ENCODE measurements at regions of chr11 and their contacts with region 1.

Region 1: DNA sequence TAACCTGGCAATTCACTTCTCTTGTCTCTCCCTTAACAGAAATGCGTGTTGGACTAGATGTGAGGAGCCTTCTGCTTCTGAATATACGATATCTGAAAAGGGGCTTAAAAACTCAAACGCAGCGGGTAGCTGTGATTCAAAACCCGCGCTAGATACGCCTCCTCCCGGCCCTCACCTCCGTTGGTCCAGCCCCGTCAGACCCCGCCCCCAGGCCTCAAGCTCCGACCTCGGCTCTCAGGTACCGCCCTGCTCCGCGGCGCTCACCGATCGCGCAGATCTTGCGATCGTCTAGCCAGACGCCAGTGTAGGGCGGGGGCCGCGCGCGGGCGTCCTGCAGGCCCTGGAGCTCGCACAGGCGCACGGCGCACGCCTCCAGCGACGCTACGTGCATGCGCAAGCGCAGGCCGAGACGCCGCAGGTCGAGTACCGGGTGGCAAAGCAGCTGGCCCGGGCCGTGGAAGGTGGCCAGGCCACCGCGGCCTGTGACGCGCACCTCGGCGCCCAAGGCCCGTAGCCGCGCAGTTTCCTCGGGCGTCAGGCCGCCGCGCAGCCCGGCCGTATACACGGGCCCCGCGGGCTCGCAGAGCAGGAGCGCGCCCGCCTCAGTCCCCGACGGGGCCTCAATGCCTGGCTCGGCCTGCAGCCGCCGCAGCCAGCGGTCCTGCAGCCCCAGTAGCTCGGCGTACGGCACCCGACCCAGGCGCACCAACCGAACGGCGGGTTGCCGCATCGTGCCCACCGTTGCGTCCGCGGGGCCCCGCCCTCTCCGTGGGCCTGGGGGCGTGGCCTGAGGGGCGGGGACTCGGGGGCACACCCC is at the start of gene LIPT2:
- DNase-seq: peak; percentile 95 to 97
- ATAC-seq: peak; percentile 98 to 100 (median 99)
- H3K4me3 ChIP-seq: peak within 1 kb of the TSS; percentile 45 to 96 (median 84)
- H3K27ac ChIP-seq: peak within 1 kb of the TSS; percentile 93 to 99 (median 98)
- H3K4me1 ChIP-seq: peaks cover 0 to 20% (median 10%) of the 10 kb centered on the region in 9 donors
- H3K27me3 ChIP-seq: no peaks in the 10 kb centered on the region
- CTCF ChIP-seq: peak in 1 of 9 donors; percentile 16
- total RNA-seq, gene LIPT2: 1.0 to 3.8 (median 1.7) TPM

Region 2: DNA sequence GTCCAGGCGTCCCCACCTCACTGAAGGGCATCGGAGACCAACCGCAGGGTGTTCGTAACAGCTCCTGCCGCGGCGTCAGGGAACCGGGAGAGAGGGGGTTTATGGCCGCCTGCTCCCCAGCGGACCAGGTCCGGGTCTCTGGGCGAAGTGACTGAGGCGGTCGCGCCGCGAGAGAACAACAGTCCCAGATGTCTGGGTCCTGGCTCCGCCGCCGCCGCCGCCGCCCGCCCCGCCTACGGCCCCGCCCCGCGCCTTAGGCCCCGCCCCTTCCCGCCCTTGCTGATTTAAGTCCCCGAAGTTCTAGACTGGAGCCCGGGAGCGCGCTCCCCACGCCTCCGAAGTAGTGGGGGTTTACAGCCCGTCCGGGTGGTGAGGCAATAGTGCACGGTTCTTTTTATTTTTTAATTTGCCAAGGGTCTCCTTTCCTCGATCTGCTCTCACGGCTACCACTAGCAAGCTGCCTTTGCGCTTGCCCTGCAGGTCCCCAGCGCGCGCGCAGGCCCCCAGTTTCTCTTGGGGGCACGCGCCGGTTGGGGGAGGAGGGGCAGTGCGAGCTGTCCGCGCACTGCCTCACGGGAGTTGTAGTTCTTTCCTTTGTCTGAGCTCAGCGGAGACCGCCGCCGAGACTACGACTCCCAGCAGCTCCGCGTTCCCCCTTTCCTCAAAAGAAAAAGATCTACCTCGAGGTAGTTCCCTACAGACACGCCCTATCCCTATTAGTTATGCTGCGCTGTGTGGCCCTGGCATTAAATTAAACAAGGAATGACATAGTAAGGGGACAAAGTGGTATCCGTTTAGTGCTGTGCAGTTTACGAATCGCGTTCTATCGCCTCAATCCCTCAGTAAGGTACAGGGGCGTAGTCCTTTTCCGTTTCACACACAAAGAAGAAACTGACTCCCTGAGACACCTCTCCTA is 94.7 kb before region 1 on chr11 and contains the start of gene PGM2L1:
- intact Hi-C with region 1: loop called in 1 of 10 experiments (anchors 5 kb)
- DNase-seq: peak; percentile 90 to 96
- ATAC-seq: peak; percentile 97 to 99 (median 99)
- H3K4me3 ChIP-seq: peak within 1 kb of the TSS; percentile 70 to 96 (median 84)
- H3K27ac ChIP-seq: peak within 1 kb of the TSS; percentile 53 to 90 (median 82)
- H3K4me1 ChIP-seq: peaks cover 0 to 13% (median 0%) of the 10 kb centered on the region in 9 donors
- H3K27me3 ChIP-seq: no peaks in the 10 kb centered on the region
- CTCF ChIP-seq: no peak
- total RNA-seq, gene PGM2L1: 0.91 to 2.5 (median 1.7) TPM

Region 3: GRCh38 chr11:74570266-74571061 is 77.3 kb after region 1 on chr11:
- intact Hi-C with region 1: no loop called
- DNase-seq: peak in 1 of 2 donors; percentile 34
- ATAC-seq: peak in 7 of 8 donors; percentile 74 to 86 (median 78)
- H3K4me3 ChIP-seq: no peak overlapping the region
- H3K27ac ChIP-seq: no peak overlapping the region
- H3K4me1 ChIP-seq: no peaks in the 10 kb centered on the region
- H3K27me3 ChIP-seq: peaks cover 0 to 7% (median 0%) of the 10 kb centered on the region in 7 donors
- CTCF ChIP-seq: peak; percentile 51 to 78 (median 76)

Measured in heart right ventricle (tissue), 16 donors.